Heart right ventricle (tissue), 16 donors: ENCODE measurements at regions of chr22 and their contacts with region 1.

Region 1: DNA sequence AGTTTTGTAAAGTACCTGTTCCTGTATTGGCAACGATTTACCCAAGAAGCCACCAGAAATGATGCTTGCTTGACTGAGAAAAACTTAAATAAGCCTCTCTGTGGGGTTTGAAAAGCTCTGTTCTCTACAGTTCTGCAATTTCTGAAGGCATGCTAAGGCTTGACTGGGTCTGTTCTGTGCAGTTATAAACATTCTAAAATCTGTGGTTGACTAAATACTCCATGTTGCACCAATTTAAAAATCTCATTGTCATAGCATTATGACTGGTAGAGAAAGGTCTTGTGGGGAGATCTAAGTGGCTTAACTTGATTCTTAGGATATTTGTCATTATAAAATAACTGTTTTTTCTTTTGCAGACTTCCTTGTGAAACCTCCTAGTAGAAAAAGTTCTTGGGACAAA is 73.7 kb downstream of the MTMR3 start:
- DNase-seq: no peak
- ATAC-seq: no peak
- H3K4me3 ChIP-seq: no peak overlapping the region
- H3K27ac ChIP-seq: no peak overlapping the region
- H3K4me1 ChIP-seq: peaks cover 0 to 26% (median 17%) of the 10 kb centered on the region in 9 donors
- H3K27me3 ChIP-seq: no peaks in the 10 kb centered on the region
- CTCF ChIP-seq: no peak

Region 2: GRCh38 chr22:29917052-29917902 is 39.4 kb before region 1 on chr22:
- intact Hi-C with region 1: loop called in 1 of 10 experiments (anchors 5 kb)
- DNase-seq: peak in 1 of 2 donors; percentile 23
- ATAC-seq: peak in 3 of 8 donors; percentile 37 to 76 (median 58)
- H3K4me3 ChIP-seq: no peak overlapping the region
- H3K27ac ChIP-seq: no peak overlapping the region
- H3K4me1 ChIP-seq: peaks cover 13 to 82% (median 71%) of the 10 kb centered on the region in 9 donors
- H3K27me3 ChIP-seq: no peaks in the 10 kb centered on the region
- CTCF ChIP-seq: no peak